ENCODE measurements at regions of chr3 and their contacts with region 1.

Region 1: DNA sequence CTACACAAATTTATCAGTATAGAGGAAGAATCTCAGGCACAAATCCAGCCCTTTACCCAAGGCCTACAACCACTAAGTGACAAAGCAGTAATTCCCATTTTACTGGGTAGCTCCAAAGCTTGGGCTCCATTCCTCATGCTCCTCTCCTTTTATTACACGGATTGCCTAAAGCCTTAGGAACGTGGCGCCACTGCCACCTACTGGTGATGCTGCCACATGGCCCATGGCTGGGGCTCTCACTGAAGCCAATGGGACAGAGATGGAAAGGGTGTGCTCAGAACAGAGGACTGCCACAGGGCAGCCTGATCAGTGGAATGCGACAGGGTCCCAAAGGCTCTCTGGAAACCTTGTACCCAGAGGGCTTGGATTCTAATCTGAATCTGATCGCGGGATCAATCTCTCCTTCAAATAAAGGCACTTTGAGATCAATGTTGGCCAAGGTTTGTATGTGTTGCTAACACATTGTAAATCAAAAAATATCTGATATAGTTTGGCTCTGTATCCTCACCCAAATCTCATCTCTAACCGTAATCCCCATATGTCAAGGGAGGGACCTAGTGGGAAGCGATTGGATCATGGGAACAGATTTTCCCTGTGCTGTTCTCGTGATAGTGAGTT is 33.5 kb upstream of the LYZL4 start:
- DNase-seq: peak; percentile 65
- H3K4me3 ChIP-seq: no peak overlapping the region
- H3K27ac ChIP-seq: no peak overlapping the region
- H3K4me1 ChIP-seq: no peaks in the 10 kb centered on the region
- H3K27me3 ChIP-seq: no peaks in the 10 kb centered on the region
- CTCF ChIP-seq: peak; percentile 99

Region 2: DNA sequence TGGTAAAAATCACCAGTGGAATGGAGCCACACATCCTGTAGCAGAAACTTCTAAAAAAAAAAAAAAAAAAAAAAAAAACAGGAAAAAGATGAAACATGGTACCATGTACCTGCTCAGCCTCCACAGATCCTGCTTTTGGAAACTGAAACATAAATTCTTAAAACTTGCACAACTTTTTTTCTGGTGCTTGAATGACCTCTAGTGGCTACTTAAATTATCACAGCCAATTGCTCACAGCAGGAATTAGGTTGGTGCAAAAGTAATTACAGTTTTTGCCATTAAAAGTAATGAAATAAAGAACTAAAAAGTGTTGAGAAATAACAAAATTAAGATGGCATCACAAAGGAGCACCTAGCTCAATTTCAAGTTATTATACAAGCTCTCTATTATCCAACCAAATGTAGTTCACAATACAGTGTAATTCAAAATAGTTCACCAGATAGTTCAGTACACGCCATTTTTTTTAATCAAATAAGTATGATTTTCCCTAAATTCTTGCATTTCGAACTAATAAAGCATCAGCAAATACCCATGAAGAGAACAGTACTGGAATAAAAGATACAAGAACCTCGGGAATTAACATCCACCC is 562.6 kb before region 1 on chr3:
- CTCF ChIA-PET with region 1: no interaction called
- dilution Hi-C with region 1: no loop called
- in situ Hi-C with region 1: loop called in 1 of 2 experiments (anchors 25 kb)
- intact Hi-C with region 1: no loop called
- DNase-seq: peak; percentile 29
- H3K4me3 ChIP-seq: no peak overlapping the region
- H3K27ac ChIP-seq: no peak overlapping the region
- H3K4me1 ChIP-seq: no peaks in the 10 kb centered on the region
- H3K27me3 ChIP-seq: no peaks in the 10 kb centered on the region
- CTCF ChIP-seq: peak; percentile 54 to 55

Region 3: DNA sequence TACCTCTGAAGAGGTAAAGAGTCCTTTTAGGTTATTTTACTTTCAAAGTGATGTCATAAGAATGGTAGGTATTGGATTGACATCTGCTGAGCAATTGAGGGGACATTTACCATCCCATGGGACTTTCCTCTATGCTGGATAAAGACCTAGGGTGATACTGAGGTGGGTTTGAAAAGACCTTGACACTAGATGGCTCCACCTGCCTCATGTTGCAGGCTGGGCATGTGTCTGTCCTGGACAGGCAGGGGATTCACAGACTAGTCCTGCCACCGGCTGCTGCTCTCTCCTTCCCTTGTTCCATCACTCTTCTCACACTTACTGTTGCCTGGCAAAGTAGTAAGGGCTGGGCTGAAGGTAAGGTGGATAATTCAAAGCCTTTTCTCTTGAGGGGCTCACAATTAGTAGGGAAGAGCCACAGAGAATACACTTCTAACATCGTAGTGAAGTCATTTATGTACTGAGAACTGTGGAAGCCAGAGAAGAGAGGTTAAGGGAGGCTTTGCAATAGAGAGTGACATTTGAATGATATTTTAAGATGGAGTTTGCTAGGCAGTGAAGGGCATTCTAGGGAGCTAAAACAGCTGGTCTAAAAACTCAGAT is 325.1 kb before region 1 on chr3:
- CTCF ChIA-PET with region 1: no interaction called
- dilution Hi-C with region 1: loop called (anchors 25 kb)
- in situ Hi-C with region 1: no loop called
- intact Hi-C with region 1: loop called (anchors 2 kb)
- DNase-seq: peak; percentile 66
- H3K4me3 ChIP-seq: no peak overlapping the region
- H3K27ac ChIP-seq: peak overlapping the region; percentile 30
- H3K4me1 ChIP-seq: peaks cover 73% of the 10 kb centered on the region
- H3K27me3 ChIP-seq: no peaks in the 10 kb centered on the region
- CTCF ChIP-seq: peak; percentile 43 to 62

Region 4: DNA sequence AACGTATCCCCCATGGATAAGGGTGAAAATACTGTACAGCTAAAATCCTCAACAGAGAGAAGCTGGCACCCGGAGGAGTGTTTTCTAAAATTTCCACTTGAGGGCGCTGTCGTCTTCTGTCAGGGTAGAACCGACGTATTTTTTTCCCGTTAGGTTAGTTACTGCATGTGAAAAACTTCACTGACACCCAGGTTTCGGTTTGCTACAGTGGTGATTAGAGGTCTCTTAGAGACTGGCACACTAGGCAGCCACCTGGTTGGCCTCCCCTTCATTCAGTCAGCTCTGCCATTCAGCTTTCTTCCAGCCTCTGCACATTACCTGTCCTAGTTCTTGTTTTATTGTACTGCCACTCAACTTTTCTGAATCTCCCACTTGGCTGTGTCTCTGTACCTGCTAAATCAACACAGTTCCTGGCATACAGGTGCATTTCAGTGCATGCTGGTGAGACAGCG is 196.3 kb before region 1 on chr3:
- CTCF ChIA-PET with region 1: interaction called, 19 read pairs
- dilution Hi-C with region 1: loop called (anchors 25 kb)
- in situ Hi-C with region 1: loop called (anchors 5 kb)
- intact Hi-C with region 1: loop called (anchors 1 kb)
- DNase-seq: peak; percentile 50
- H3K4me3 ChIP-seq: no peak overlapping the region
- H3K27ac ChIP-seq: no peak overlapping the region
- H3K4me1 ChIP-seq: peaks cover 6% of the 10 kb centered on the region
- H3K27me3 ChIP-seq: no peaks in the 10 kb centered on the region
- CTCF ChIP-seq: peak; percentile 70 to 74

Region 5: DNA sequence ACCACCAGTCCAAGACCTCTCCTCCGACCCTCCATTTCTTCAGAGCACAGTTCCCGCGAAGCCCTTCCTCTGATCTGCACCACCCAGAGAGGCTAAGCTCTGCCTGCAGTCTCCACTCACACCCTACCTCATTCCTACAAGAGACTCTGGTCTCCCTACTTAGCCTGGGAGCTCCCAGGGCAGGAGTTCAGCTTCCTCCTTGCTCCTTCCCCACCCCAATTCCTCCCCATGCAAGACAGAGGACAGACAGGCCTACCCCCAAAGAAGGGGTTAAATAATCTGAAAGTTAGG is 46.0 kb after region 1 on chr3:
- CTCF ChIA-PET with region 1: no interaction called
- dilution Hi-C with region 1: loop called (anchors 5 kb)
- in situ Hi-C with region 1: no loop called
- intact Hi-C with region 1: no loop called
- DNase-seq: no peak
- H3K4me3 ChIP-seq: no peak overlapping the region
- H3K27ac ChIP-seq: no peak overlapping the region
- H3K4me1 ChIP-seq: peaks cover 15% of the 10 kb centered on the region
- H3K27me3 ChIP-seq: no peaks in the 10 kb centered on the region
- CTCF ChIP-seq: no peak

Region 6: DNA sequence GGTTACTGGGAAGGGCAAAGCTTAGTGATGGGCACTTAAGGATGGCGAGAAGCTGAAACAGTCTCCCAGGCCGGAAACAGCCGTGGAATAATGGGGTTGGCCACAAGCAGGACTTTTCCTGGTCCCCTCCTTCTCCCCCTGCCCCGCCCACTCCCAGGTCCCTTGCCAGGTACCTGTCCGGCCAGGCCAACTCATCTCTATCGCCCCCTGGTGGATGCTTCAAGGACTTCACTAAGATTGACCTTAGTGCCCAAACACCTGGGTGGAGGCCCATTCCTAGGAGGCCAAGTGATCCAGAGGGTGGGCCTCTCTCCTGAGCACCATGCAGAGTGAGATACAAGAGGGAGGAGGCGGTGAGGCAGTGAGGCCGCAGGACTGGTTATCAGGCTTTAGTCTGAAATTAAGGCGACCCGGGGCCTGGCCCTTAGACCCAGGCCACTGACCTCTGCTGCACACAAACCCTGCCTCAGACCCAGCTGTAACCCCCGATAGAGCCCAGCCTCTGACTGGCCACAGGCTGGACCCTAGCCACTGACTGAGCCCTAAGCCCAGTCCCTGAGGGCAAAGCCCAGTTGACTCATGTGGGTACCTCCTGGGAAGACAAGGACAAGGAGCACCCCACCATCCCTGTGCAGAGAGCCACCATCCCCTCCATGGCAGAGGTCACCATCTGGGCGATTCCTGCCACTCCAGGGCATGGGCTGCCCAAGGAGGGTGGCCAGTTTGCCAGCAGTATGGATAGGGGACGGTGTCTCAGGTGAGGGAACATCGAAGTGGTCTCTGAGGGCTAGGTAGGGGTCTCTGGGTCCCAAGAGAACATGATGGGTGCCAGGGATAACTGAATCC is 96.2 kb after region 1 on chr3:
- CTCF ChIA-PET with region 1: interaction called, 4 read pairs
- dilution Hi-C with region 1: no loop called
- in situ Hi-C with region 1: no loop called
- intact Hi-C with region 1: loop called (anchors 2 kb)
- DNase-seq: peak; percentile 24
- H3K4me3 ChIP-seq: no peak overlapping the region
- H3K27ac ChIP-seq: no peak overlapping the region
- H3K4me1 ChIP-seq: no peaks in the 10 kb centered on the region
- H3K27me3 ChIP-seq: no peaks in the 10 kb centered on the region
- CTCF ChIP-seq: peak; percentile 60 to 87

Region 7: GRCh38 chr3:43659250-43659880 is 1215.4 kb after region 1 on chr3:
- CTCF ChIA-PET with region 1: no interaction called
- dilution Hi-C with region 1: no loop called
- in situ Hi-C with region 1: no loop called
- intact Hi-C with region 1: no loop called
- DNase-seq: no peak
- H3K4me3 ChIP-seq: no peak overlapping the region
- H3K27ac ChIP-seq: no peak overlapping the region
- H3K4me1 ChIP-seq: no peaks in the 10 kb centered on the region
- H3K27me3 ChIP-seq: no peaks in the 10 kb centered on the region
- CTCF ChIP-seq: no peak